ENCODE measurements at regions of chr18 and their contacts with region 1.

Region 1: GRCh38 chr18:46173393-46174341 is 69.5 kb downstream of the HAUS1 start:
- DNase-seq: peak; percentile 98
- ATAC-seq: peak; percentile 98

Region 2: DNA sequence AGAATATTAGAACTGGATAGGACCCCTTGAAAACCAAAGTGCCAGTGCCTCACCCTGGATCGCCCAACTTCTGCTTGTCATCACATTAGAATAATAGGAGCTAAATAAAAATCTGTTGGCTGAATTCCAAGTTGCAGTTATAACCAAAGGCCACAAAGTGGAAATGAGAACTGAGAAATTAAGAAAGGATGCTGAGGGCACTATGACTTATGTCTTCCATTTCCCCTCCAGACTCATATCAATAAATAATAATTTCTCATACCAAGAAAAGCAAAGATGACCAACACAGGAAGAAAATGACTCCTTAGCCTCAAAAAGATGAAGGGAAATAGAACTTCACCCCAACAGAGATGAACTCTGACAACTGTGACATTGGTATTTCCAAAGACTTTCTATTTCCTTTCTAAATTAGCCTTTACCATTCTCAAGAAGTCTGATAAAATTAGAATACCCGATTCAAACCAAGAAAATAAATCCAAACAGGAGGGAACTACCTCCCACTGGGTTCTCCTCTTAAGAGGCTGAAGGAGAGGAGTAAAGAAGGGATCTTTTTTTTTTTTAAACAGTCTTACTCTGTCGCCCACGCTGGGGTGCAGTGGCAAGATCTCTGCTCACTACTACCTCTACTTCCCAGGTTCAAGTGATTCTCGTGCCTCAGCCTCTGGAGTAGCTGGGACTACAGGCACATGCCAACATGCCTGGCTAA is 160.0 kb before region 1 on chr18:
- intact Hi-C with region 1: no loop called
- DNase-seq: no peak
- ATAC-seq: no peak

Region 3: GRCh38 chr18:46073474-46074331 is 100.0 kb before region 1 on chr18:
- intact Hi-C with region 1: no loop called
- DNase-seq: no peak
- ATAC-seq: peak; percentile 39

Region 4: DNA sequence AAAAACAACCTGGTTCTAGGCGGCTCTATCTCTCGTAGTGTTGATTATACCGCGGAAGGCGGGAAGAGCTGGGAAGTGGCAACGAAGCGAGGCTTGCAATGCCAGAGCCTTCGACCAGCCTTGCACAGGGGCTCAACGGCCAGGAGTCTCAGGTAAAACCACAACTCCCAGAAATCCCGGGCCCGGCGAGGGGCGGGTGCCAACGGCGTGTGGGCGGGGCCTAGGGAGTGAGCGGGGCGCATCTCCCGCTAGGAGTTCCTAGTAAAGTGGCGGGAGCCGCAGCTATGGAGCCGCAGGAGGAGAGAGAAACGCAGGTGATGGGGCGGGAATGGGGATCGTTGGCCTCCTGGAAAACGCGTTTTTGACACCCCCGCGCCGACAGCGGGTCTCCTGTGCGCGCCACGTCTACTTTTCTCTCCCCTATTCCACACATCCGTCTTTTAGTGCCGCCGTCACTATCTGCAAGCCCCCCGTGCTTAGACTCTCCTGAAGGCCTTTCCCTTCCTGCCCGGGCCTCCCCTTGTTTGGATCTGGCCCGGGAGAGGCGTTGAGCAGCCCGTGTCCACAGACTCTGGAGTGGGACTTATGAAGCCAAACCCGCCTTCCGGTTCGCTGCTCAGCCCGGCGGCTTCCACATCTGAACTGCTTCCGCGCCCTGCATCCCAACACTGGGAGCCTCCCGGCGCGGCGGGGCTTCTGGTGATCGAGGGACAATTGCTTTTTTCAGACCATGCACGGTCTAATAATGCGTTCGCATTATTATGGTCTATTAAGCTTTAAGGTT is 69.3 kb before region 1 on chr18 and contains the start of gene HAUS1:
- intact Hi-C with region 1: no loop called
- DNase-seq: peak; percentile 96
- ATAC-seq: peak; percentile 97
- total RNA-seq, gene HAUS1: 7.1 TPM

Region 5: DNA sequence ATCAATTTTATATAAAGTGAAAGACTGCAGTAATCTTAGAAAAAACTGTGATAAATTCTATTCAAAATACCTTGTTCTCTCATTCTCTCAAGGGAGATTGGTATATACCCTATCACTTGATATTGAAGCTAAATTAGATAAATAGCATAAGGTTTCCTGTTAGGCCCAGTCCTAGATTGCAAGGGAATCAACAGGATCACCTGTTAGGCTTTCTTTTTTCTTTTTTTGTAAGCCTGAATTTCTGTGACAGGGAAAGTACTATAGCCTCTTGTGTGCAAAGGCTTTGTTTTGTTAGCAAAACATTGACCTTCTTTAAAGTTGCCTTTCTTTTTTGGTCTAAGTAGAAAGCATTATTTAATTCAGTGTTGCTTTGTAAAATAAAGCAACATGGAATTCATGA is 30.5 kb after region 1 on chr18:
- intact Hi-C with region 1: no loop called
- DNase-seq: no peak
- ATAC-seq: no peak

Region 6: DNA sequence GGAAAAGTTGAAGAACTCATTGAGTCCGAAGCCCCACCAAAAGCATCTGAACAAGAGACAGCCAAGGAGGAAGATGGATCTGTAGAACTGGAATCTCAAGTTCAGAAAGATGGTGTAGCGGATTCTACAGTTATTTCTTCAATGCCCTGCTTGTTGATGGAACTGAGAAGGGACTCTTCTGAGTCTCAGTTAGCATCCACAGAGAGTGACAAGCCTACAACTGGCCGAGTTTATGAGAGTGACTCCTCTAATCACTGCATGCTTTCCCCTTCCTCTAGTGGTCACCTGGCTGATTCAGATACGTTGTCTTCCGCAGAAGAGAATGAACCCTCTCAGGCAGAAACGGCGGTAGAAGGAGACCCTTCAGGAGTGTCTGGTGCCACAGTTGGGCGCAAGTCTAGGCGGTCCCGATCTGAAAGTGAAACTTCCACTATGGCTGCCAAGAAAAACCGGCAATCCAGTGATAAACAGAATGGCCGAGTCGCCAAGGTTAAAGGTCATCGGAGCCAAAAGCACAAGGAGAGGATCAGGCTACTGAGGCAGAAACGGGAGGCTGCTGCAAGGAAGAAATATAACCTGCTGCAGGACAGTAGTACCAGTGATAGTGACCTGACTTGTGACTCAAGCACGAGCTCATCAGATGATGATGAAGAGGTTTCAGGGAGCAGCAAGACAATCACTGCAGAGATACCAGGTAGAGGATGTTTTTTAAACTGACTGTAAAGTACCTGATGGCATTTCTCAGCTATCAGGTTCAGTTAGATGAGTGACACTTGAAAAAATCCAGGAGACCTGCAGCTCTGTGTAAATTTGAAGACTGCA is 42.4 kb after region 1 on chr18:
- intact Hi-C with region 1: loop called (anchors 2 kb)
- DNase-seq: no peak
- ATAC-seq: peak; percentile 52

Region 7: DNA sequence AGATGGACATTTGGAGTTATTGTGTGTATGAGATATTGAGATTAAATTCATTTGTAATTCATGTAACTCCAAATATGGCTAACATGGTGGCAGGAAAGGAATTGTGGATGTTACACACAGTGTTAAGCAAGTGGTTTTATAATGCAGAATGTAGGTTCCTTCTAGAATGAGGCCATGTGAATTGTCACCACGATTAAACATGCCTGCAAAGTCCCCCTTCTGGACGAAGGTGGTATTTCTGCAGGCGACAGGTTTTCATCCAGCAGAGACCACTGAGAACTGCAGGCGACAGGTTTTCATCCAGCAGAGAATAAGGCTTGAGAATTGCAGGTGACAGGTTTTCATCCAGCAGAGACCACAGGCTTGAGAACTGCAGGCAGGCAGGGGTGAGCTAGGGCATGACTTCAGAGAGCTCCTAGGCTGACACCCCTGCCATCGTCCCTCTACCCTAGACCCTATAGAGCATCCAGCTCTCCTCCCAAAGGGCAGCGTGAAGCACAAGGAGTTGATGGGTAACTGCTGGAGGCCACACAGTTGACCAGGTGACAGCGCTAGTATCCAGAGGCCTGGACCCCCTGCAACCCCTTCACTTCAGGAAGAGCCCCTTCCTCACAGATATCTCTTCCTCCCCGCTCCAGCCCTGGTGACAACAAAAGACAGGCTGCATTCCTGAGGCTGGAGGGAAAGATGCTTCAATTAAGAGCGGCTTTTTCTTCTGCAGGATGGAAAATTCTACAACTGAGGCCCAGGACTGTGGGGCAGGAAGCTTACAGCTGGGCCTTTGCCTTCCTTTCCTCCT is 307.6 kb after region 1 on chr18:
- intact Hi-C with region 1: loop called (anchors 5 kb)
- DNase-seq: no peak
- ATAC-seq: no peak